GM23248 (cell line): ENCODE measurements at regions of chr2 and their contacts with region 1.

Region 1: DNA sequence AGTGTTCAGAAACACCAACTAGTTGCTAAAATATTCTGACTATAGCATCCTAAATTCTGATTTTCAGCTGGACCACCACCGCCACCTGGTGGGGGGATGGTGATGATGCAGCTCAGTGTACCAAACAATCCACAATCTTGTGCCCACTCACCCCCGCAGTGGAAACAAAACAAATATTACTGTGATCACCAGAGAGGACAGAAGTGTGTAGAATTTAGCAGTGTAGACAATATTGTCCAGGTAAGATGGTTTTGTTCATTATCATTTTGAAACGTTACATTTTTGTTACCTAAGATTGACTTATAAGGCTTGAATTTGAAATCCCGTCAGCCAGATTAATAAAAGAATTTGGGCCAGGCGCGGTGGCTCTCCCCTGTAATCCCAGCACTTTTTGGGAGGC is 31.7 kb upstream of the UBXN4 start:
- DNase-seq: peak; percentile 53
- H3K4me3 ChIP-seq: no peak overlapping the region
- H3K27ac ChIP-seq: no peak overlapping the region
- H3K4me1 ChIP-seq: no peaks in the 10 kb centered on the region
- H3K27me3 ChIP-seq: no peaks in the 10 kb centered on the region

Region 2: GRCh38 chr2:135010200-135010942 is 699.6 kb before region 1 on chr2:
- in situ Hi-C with region 1: loop called (anchors 10 kb)
- DNase-seq: no peak
- H3K4me3 ChIP-seq: no peak overlapping the region
- H3K27ac ChIP-seq: no peak overlapping the region
- H3K4me1 ChIP-seq: no peaks in the 10 kb centered on the region
- H3K27me3 ChIP-seq: peaks cover 23% of the 10 kb centered on the region; the same call in 1 of the 2 replicates

Region 3: DNA sequence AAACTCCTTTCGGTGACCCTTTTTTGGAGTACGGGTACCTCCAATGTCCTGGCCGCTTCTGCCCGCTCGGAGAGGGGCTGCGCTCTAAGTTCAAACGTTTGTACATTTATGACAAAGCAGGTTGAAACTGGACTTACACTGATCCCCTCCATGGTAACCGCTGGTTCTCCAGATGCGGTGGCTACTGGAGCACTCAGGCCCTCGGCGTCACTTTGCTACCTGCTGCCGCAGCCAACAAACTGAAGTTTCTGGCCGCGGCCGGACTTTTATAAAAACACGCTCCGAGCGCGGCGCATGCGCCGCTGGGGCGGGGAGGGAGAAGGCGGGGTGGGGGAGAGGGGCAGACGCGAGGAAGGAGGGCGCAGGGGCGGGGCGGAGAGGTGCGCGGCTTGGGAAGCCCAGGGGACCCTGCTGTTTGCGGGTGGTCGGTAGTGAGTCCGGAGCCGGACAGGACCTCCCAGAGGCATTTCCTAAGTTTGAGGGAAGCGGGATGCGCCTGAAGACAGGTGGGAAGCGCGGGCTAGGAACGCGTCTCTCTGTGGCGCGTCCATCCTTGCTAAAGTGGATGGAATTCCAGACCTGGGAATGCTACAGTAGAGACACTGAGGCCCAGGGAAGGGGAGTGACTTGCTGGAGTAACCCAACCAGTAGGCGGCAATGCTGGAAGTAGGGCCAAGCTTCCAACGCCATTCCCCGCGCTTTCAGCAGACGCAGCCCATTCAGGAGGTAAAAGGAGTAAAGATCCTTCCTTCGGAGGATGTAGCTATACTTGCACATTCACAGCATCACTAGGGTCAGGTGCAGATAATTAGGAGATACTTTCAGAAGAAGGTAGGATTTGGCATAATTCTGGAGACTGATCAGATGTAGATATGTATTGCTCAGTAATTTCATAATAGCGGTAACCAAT is 408.2 kb after region 1 on chr2 and contains the start of gene CXCR4:
- in situ Hi-C with region 1: no loop called
- DNase-seq: peak; percentile 34
- H3K4me3 ChIP-seq: peak within 1 kb of the TSS; percentile 55
- H3K27ac ChIP-seq: no peak within 1 kb of the TSS
- H3K4me1 ChIP-seq: no peaks in the 10 kb centered on the region
- H3K27me3 ChIP-seq: peaks cover 81% of the 10 kb centered on the region
- total RNA-seq, gene CXCR4: not detected in 2 replicates